Naive thymus-derived CD4-positive, alpha-beta T cell (primary cell): ENCODE measurements at regions of chr19 and their contacts with region 1.

Region 1: DNA sequence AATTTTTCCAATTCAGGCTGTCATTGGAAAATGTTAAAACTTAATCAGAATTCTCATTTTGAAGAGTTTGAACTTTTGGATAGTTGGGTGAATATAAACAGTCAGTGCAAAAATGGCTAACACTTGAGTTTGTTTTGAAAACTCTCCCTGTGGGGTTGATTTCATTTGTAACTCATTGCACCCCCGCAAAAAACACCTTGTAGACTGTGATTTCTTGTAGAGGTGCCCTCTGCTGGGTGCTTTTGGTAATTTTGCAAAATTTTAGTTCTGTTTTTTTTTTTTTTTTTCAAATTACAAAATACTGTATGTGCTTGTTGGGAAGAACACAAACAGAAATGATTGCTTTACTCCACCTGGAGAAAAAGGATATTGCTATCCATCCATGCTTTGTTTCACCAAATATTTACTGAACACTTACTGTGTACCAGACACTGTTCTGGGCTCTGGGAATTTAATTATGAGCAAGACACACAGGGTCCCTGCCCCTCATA is 28.2 kb upstream of the GPI start:
- DNase-seq: peak in 7 of 9 donors; percentile 34 to 65 (median 60)
- ATAC-seq: peak; percentile 72
- H3K4me3 ChIP-seq: no peak overlapping the region
- H3K4me3 Mint-ChIP-seq: no peak overlapping the region
- H3K27ac ChIP-seq: no peak overlapping the region
- H3K27ac Mint-ChIP-seq: peak overlapping the region in 8 of 9 donors; percentile 25 to 86 (median 55)
- H3K4me1 ChIP-seq: peaks cover 0 to 10% of the 10 kb centered on the region in 2 donors
- H3K4me1 Mint-ChIP-seq: peaks cover 3 to 16% (median 9%) of the 10 kb centered on the region in 7 donors
- H3K27me3 ChIP-seq: no peaks in the 10 kb centered on the region
- H3K27me3 Mint-ChIP-seq: no peaks in the 10 kb centered on the region

Region 2: GRCh38 chr19:34253699-34254551 is 82.9 kb before region 1 on chr19:
- CTCF ChIA-PET with region 1: no interaction called
- POLR2A ChIA-PET with region 1: interaction called, 3 read pairs
- intact Hi-C with region 1: loop called (anchors 1 to 5 kb)
- DNase-seq: peak in 7 of 9 donors; percentile 75 to 88 (median 86)
- ATAC-seq: peak; percentile 51
- H3K4me3 ChIP-seq: peak overlapping the region; percentile 72
- H3K4me3 Mint-ChIP-seq: peak overlapping the region; percentile 86 to 100 (median 96)
- H3K27ac ChIP-seq: peak overlapping the region; percentile 97
- H3K27ac Mint-ChIP-seq: peak overlapping the region; percentile 94 to 100 (median 97)
- H3K4me1 ChIP-seq: peaks cover 6 to 27% of the 10 kb centered on the region in 2 donors
- H3K4me1 Mint-ChIP-seq: peaks cover 12 to 48% (median 36%) of the 10 kb centered on the region in 7 donors
- H3K27me3 ChIP-seq: no peaks in the 10 kb centered on the region
- H3K27me3 Mint-ChIP-seq: no peaks in the 10 kb centered on the region

Region 3: GRCh38 chr19:34351382-34351826 is 14.6 kb after region 1 on chr19:
- CTCF ChIA-PET with region 1: interaction called, 4 read pairs
- POLR2A ChIA-PET with region 1: interaction called, 3 read pairs
- intact Hi-C with region 1: loop called in 1 of 2 experiments (anchors 2 kb)
- DNase-seq: peak in 1 of 9 donors; percentile 16
- ATAC-seq: no peak
- H3K4me3 ChIP-seq: no peak overlapping the region
- H3K4me3 Mint-ChIP-seq: peak overlapping the region in 7 of 10 donors; percentile 12 to 75 (median 45)
- H3K27ac ChIP-seq: peak overlapping the region; percentile 43
- H3K27ac Mint-ChIP-seq: peak overlapping the region in 8 of 9 donors; percentile 76 to 91 (median 86)
- H3K4me1 ChIP-seq: peaks cover 18 to 25% of the 10 kb centered on the region in 2 donors
- H3K4me1 Mint-ChIP-seq: peaks cover 13 to 41% (median 26%) of the 10 kb centered on the region in 7 donors
- H3K27me3 ChIP-seq: no peaks in the 10 kb centered on the region
- H3K27me3 Mint-ChIP-seq: no peaks in the 10 kb centered on the region